ENCODE measurements at regions of chr18 and their contacts with region 1.

Region 1: GRCh38 chr18:48785091-48785614 is 165.6 kb downstream of the SMAD7 start:
- DNase-seq: peak; percentile 47
- ATAC-seq: peak; percentile 91
- H3K4me3 Mint-ChIP-seq: peak overlapping the region; percentile 64
- H3K27ac Mint-ChIP-seq: peak overlapping the region; percentile 84
- H3K4me1 Mint-ChIP-seq: peaks cover 62% of the 10 kb centered on the region
- H3K27me3 Mint-ChIP-seq: no peaks in the 10 kb centered on the region
- CTCF ChIP-seq: no peak

Region 2: DNA sequence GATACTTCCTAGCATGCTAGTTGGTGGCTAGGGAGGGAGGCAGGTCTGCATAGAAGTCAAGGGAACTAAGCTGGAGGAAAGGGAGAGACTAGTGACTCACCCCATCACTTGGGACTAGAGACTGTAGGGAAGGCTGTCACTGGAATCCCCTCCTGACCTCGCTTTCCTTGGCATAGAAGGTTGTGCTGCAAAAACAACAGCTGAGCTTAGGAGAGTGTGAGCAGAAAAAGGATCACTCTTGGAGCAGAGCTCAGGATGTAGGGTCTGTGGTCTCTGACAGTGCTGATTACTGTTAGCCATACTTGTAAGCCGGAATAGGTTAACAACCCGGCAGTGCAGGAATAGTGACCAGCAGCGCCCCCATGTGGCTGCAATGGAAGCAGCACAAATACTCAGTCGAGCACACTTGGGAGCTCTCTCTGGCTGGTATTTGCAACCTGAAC is 787.8 kb before region 1 on chr18:
- CTCF ChIA-PET with region 1: no interaction called
- POLR2A ChIA-PET with region 1: no interaction called
- intact Hi-C with region 1: no loop called
- DNase-seq: no peak
- ATAC-seq: no peak
- H3K4me3 Mint-ChIP-seq: no peak overlapping the region
- H3K27ac Mint-ChIP-seq: no peak overlapping the region
- H3K4me1 Mint-ChIP-seq: no peaks in the 10 kb centered on the region
- H3K27me3 Mint-ChIP-seq: peaks cover 17% of the 10 kb centered on the region
- CTCF ChIP-seq: no peak

Region 3: DNA sequence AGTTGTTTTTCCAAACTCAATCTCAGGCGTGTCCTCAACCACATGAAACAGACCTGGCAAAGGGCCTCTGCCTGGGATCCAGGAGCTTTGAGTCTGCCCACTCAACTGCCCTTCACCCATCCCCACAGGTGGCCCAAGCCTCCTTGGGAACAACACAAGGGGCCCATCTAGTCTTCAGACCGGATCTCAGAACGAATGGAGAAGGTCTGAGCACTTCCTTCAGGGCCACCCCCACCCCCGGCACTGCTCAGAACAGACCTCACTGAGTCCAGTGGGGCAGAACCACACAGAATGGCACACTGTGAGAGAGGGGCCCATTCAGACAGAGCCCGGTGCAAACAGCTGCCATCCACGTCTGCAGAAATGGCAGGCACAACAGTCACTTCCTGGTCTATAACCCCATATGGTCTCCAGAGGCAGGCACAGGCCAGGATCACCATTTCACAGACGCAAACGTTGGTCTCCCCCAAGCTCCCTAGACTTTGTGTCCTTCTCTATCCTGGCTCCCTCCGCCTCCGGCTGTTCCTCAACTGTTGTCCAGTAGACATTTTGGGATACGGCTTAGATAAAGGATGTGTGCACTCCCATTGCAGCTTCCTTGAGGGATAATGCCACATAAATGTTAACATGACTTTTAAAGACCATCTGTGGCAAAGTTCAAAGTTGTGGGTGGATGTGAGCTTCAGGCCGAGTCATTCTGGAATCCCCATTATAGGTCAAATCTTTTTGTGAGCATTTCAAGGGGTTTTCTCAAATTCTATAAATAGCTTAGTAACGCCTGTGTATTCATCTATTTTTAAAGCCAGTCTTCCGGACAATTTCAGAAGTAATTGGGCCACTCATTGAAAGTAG is 15.9 kb after region 1 on chr18:
- CTCF ChIA-PET with region 1: interaction called, 7 read pairs
- POLR2A ChIA-PET with region 1: interaction called, 14 read pairs
- intact Hi-C with region 1: loop called (anchors 1 kb)
- DNase-seq: peak; percentile 20
- ATAC-seq: peak; percentile 85
- H3K4me3 Mint-ChIP-seq: peak overlapping the region; percentile 67
- H3K27ac Mint-ChIP-seq: peak overlapping the region; percentile 82
- H3K4me1 Mint-ChIP-seq: peaks cover 44% of the 10 kb centered on the region
- H3K27me3 Mint-ChIP-seq: no peaks in the 10 kb centered on the region
- CTCF ChIP-seq: no peak

Region 4: GRCh38 chr18:48834413-48835031 is 49.4 kb after region 1 on chr18:
- CTCF ChIA-PET with region 1: no interaction called
- POLR2A ChIA-PET with region 1: no interaction called
- intact Hi-C with region 1: loop called (anchors 1 kb)
- DNase-seq: peak; percentile 42
- ATAC-seq: peak; percentile 83
- H3K4me3 Mint-ChIP-seq: peak overlapping the region; percentile 76
- H3K27ac Mint-ChIP-seq: peak overlapping the region; percentile 80
- H3K4me1 Mint-ChIP-seq: peaks cover 37% of the 10 kb centered on the region
- H3K27me3 Mint-ChIP-seq: no peaks in the 10 kb centered on the region
- CTCF ChIP-seq: no peak

Region 5: GRCh38 chr18:48848641-48849159 is 63.5 kb after region 1 on chr18:
- CTCF ChIA-PET with region 1: no interaction called
- POLR2A ChIA-PET with region 1: no interaction called
- intact Hi-C with region 1: no loop called
- DNase-seq: no peak
- ATAC-seq: no peak
- H3K4me3 Mint-ChIP-seq: no peak overlapping the region
- H3K27ac Mint-ChIP-seq: no peak overlapping the region
- H3K4me1 Mint-ChIP-seq: peaks cover 5% of the 10 kb centered on the region
- H3K27me3 Mint-ChIP-seq: no peaks in the 10 kb centered on the region
- CTCF ChIP-seq: no peak

Region 6: GRCh38 chr18:48975649-48976204 is 190.6 kb after region 1 on chr18:
- CTCF ChIA-PET with region 1: no interaction called
- POLR2A ChIA-PET with region 1: no interaction called
- intact Hi-C with region 1: loop called (anchors 1 kb)
- DNase-seq: peak; percentile 44
- ATAC-seq: peak; percentile 78
- H3K4me3 Mint-ChIP-seq: peak overlapping the region; percentile 38
- H3K27ac Mint-ChIP-seq: no peak overlapping the region
- H3K4me1 Mint-ChIP-seq: peaks cover 14% of the 10 kb centered on the region
- H3K27me3 Mint-ChIP-seq: peaks cover 16% of the 10 kb centered on the region
- CTCF ChIP-seq: no peak

Region 7: DNA sequence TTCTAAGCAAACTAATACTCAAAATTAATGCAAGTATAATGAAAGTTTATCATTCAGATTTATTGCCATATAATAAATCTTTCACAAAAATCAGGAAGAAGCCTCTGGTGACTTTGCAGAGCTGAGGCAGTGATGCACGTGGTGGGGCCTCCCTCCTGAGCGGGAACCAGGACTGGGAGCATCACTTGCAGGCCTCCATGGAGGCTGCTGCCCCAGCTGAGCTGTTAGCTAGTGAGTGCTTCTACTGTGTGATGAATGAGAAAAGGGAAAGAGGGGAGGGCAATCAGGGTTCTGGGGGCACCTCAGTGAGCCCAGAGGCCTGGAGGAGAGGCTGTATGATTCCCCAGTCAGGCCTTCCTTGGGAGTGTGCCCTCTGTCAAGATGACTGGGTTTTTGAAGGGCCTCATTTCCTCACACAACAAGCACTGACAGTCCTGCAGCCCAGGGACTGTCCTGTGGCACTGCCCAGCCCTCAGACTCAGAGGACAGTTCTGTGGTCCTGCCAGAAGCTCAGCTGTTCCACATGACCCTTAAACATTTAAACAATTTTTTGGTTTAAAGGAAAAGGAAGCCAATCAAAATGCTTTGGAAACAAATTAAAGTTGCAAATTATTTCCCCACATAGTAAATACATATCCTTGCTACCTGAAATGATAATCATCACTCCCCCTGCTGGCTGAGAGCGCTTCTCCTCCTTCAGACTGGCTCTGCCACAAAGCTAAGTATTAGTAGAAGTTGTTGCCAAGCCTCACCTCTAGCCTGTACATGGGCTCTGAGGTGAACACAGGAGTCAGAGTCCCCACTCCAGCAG is 256.5 kb after region 1 on chr18:
- CTCF ChIA-PET with region 1: no interaction called
- POLR2A ChIA-PET with region 1: no interaction called
- intact Hi-C with region 1: loop called (anchors 2 kb)
- DNase-seq: no peak
- ATAC-seq: no peak
- H3K4me3 Mint-ChIP-seq: no peak overlapping the region
- H3K27ac Mint-ChIP-seq: no peak overlapping the region
- H3K4me1 Mint-ChIP-seq: peaks cover 3% of the 10 kb centered on the region
- H3K27me3 Mint-ChIP-seq: no peaks in the 10 kb centered on the region
- CTCF ChIP-seq: no peak